PC-9 (cell line): ENCODE measurements at regions of chr2 and their contacts with region 1.

Region 1: GRCh38 chr2:241355983-241356870 is at the start of gene FARP2:
- DNase-seq: peak; percentile 97 to 100
- H3K4me3 ChIP-seq: peak within 1 kb of the TSS; percentile 89
- H3K27ac ChIP-seq: peak within 1 kb of the TSS; percentile 53
- H3K4me1 ChIP-seq: peaks cover 44% of the 10 kb centered on the region
- H3K27me3 ChIP-seq: no peaks in the 10 kb centered on the region
- CTCF ChIP-seq: no peak
- total RNA-seq, gene FARP2: 81.5 and 89.1 TPM in 2 replicates

Region 2: DNA sequence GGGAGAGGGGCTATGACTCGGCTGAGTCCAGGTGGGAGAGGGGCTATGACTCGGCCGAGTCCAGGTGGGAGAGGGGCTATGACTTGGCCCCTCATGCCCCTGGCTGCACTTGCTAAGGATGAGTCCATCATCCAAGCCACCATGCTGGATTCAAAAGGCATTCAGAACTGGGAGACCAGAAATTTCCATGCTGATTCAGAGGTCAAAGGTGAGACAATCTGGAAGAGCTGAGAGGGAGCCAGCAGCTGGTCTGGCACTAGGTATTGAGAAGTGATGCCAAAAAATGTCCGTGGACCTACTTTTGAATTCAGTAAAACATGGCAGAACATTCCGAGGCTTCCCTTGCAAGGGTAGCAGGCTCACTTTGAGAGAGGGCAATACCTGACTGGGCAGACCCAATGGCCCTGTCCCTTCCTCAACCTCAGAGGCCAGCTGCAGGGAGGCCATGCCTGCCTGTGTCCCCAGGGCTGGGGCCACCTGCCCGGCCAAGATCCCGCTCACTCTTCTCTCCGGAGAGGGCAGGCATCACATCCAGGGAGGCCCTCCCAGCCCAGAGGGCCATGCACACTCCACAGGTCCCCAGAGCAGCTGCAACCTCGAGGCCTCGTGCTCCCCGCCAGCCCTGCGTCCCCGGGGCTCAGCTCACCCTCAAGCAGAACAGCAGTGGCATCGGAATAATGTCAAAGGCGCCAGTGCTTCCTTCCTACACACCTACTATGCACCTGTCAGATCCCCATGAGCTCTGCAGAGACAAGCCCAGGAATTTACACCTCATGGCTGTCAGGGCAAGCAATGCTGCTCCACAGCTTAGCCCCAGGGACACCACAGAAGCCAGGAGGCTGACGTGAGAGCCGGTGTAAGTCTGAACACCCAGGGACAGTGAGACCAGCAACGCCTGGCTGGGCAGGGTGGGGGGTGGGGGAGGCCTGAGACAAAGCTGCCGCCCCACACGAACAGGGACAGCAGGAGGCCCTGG is 1000.9 kb before region 1 on chr2:
- CTCF ChIA-PET with region 1: no interaction called
- POLR2A ChIA-PET with region 1: no interaction called
- intact Hi-C with region 1: no loop called
- DNase-seq: no peak
- H3K4me3 ChIP-seq: no peak overlapping the region
- H3K27ac ChIP-seq: no peak overlapping the region
- H3K4me1 ChIP-seq: no peaks in the 10 kb centered on the region
- H3K27me3 ChIP-seq: peaks cover 20% of the 10 kb centered on the region; the same call in 1 of the 2 replicates
- CTCF ChIP-seq: no peak

Region 3: DNA sequence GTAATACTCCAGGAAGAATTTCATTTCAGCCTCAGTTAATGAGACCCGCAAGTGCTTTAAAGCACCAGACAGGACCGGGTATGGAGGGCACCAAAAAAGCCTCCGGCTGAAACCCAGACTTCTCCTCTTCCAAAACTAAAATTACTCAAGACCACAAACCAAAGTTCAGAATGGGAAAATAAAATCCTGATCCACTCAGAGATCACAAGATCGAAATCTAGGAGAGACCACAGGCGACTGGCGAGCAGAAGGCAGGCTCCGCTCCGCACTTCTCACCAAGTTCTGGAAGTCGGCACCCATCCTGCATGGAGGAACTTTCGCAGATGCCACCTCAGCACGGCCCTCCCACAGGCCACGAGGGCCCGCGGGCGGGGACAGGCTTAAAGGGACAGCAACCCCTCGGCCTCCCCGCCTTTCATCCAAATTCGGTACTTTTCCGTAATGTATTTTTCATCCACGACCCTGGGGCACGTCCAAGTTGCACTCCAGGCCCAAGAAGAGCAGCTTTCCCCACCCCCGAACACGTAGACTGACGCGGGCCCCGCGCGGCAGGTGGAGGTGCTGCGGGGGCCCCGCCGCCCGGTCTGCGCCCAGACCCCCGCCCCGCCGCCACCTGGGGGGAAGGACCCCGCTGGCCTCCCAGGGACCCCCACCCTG is 84.5 kb before region 1 on chr2:
- CTCF ChIA-PET with region 1: no interaction called
- POLR2A ChIA-PET with region 1: no interaction called
- intact Hi-C with region 1: loop called (anchors 2 kb)
- DNase-seq: peak; percentile 76 to 84
- H3K4me3 ChIP-seq: peak overlapping the region; percentile 65
- H3K27ac ChIP-seq: peak overlapping the region; percentile 42; the same call in 1 of the 2 replicates
- H3K4me1 ChIP-seq: peaks cover 31% of the 10 kb centered on the region
- H3K27me3 ChIP-seq: no peaks in the 10 kb centered on the region
- CTCF ChIP-seq: no peak

Region 4: DNA sequence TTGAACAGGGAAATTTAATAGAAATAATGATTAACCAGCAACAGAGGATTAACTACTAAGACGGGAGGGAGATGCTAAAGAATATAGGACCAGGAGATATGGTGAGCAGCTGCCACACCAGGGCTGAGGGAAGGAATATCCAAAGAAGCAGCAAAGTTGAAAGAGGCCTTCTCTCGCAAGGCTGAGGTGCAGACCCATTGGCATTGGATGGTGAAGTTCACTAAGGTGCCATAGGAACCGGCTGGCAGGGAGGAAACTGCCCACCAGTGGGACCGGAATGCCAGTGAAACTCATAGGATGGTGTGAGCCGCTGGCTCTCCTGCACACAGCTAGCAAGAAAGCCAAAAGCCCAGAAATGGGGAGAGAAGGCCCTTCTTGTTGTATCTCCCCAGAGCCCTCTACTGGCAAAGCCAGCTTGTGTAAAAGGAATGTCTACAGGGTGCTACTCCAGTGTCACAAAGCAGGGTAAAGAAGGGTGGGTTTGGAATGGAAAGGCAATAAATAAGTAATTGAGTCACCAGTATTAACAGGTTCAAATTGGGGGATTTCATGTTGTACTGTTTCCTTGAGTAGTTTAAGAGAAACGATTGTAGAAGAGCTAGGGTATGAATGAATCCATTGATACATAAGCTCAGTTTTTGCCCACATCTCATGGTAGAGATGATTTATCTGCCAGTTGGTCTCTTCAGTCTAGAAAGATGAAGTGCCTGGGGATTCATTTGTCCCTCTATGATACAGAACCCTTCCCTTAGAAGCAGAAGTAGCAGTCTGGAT is 35.9 kb after region 1 on chr2:
- CTCF ChIA-PET with region 1: no interaction called
- POLR2A ChIA-PET with region 1: no interaction called
- intact Hi-C with region 1: loop called (anchors 2 kb)
- DNase-seq: peak; percentile 29 to 47
- H3K4me3 ChIP-seq: no peak overlapping the region
- H3K27ac ChIP-seq: no peak overlapping the region
- H3K4me1 ChIP-seq: no peaks in the 10 kb centered on the region
- H3K27me3 ChIP-seq: no peaks in the 10 kb centered on the region
- CTCF ChIP-seq: peak; percentile 65

Region 5: GRCh38 chr2:241558532-241559322 is 202.5 kb after region 1 on chr2 and contains the start of gene BOK:
- CTCF ChIA-PET with region 1: no interaction called
- POLR2A ChIA-PET with region 1: no interaction called
- intact Hi-C with region 1: loop called (anchors 5 kb)
- DNase-seq: peak; percentile 59 to 88
- H3K4me3 ChIP-seq: peak within 1 kb of the TSS; percentile 79
- H3K27ac ChIP-seq: no peak within 1 kb of the TSS
- H3K4me1 ChIP-seq: peaks cover 23% of the 10 kb centered on the region
- H3K27me3 ChIP-seq: no peaks in the 10 kb centered on the region
- CTCF ChIP-seq: no peak
- total RNA-seq, gene BOK: 72.8 and 107 TPM in 2 replicates

Region 6: GRCh38 chr2:241702132-241703031 is 346.2 kb after region 1 on chr2:
- CTCF ChIA-PET with region 1: no interaction called
- POLR2A ChIA-PET with region 1: no interaction called
- intact Hi-C with region 1: loop called (anchors 10 kb)
- DNase-seq: peak; percentile 81 to 97
- H3K4me3 ChIP-seq: peak overlapping the region; percentile 99
- H3K27ac ChIP-seq: peak overlapping the region; percentile 89; the same call in 1 of the 2 replicates
- H3K4me1 ChIP-seq: peaks cover 18% of the 10 kb centered on the region
- H3K27me3 ChIP-seq: no peaks in the 10 kb centered on the region
- CTCF ChIP-seq: peak; percentile 66